Mammary epithelial cell (primary cell): ENCODE measurements at regions of chr1 and their contacts with region 1.

Region 1: DNA sequence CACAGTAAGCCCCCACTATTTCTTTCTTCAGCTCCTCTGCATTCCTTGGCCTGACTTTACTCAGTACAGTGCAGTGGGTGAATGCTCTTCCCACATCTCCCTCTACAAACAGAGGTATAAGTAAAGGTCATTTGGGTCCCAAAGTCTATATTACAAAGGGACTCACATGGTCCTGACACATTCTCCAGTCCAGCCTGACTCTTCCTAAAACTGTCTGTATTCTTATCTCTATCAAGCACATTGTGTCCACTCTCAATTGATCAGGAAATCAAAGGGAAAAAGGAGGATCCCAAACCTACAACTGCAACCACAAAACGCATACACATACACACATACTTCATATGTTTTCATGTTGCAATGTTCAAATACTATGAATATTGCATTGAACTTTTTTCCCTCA is 49.4 kb downstream of the FRRS1 start:
- DNase-seq: no peak
- H3K4me3 ChIP-seq: no peak overlapping the region
- H3K27ac ChIP-seq: no peak overlapping the region
- H3K4me1 ChIP-seq: no peaks in the 10 kb centered on the region
- H3K27me3 ChIP-seq: no peaks in the 10 kb centered on the region
- CTCF ChIP-seq: no peak

Region 2: GRCh38 chr1:98898940-98899339 is 818.1 kb before region 1 on chr1:
- CTCF ChIA-PET with region 1: no interaction called
- dilution Hi-C with region 1: loop called (anchors 10 kb)
- in situ Hi-C with region 1: no loop called
- intact Hi-C with region 1: no loop called
- DNase-seq: no peak
- H3K4me3 ChIP-seq: no peak overlapping the region
- H3K27ac ChIP-seq: no peak overlapping the region
- H3K4me1 ChIP-seq: no peaks in the 10 kb centered on the region
- H3K27me3 ChIP-seq: no peaks in the 10 kb centered on the region
- CTCF ChIP-seq: no peak

Region 3: GRCh38 chr1:99645699-99646531 is 71.1 kb before region 1 on chr1 and contains the start of gene PALMD:
- CTCF ChIA-PET with region 1: no interaction called
- dilution Hi-C with region 1: no loop called
- in situ Hi-C with region 1: no loop called
- intact Hi-C with region 1: no loop called
- DNase-seq: peak; percentile 81
- H3K4me3 ChIP-seq: peak within 1 kb of the TSS; percentile 47 to 62 (median 53)
- H3K27ac ChIP-seq: peak within 1 kb of the TSS; percentile 87
- H3K4me1 ChIP-seq: peaks cover 48% of the 10 kb centered on the region
- H3K27me3 ChIP-seq: no peaks in the 10 kb centered on the region
- CTCF ChIP-seq: no peak
- total RNA-seq, gene PALMD: 2.7 to 36.7 TPM